ENCODE measurements at regions of chr13 and their contacts with region 1.

Region 1: GRCh38 chr13:36999054-36999714 is at the start of gene ALG5:
- DNase-seq: peak; percentile 78
- ATAC-seq: peak; percentile 88
- H3K4me3 ChIP-seq: peak within 1 kb of the TSS; percentile 97 to 99 (median 97)
- H3K27ac ChIP-seq: peak within 1 kb of the TSS; percentile 99
- H3K4me1 ChIP-seq: peaks cover 27% of the 10 kb centered on the region
- H3K27me3 ChIP-seq: no peaks in the 10 kb centered on the region; a peak in 1 of 5 replicates
- CTCF ChIP-seq: peak; percentile 87
- EP300 ChIP-seq: 0 out of 4 replicates have a peak, but pooled peaks of 1 of the 2 experiments have one; percentile 21
- POLR2A ChIP-seq: peak; percentile 92
- RAD21 ChIP-seq: peak; percentile 49; the same call in 1 of the 2 replicates
- total RNA-seq, gene ALG5: 29.0 and 51.1 TPM in 2 replicates

Region 2: GRCh38 chr13:36074659-36075058 is 924.5 kb before region 1 on chr13:
- CTCF ChIA-PET with region 1: no interaction called
- POLR2A ChIA-PET with region 1: no interaction called
- in situ Hi-C with region 1: no loop called
- intact Hi-C with region 1: no loop called
- DNase-seq: no peak
- ATAC-seq: no peak
- H3K4me3 ChIP-seq: no peak overlapping the region
- H3K27ac ChIP-seq: no peak overlapping the region
- H3K4me1 ChIP-seq: no peaks in the 10 kb centered on the region
- H3K27me3 ChIP-seq: no peaks in the 10 kb centered on the region
- CTCF ChIP-seq: no peak
- EP300 ChIP-seq: no peak
- POLR2A ChIP-seq: no peak
- RAD21 ChIP-seq: no peak

Region 3: GRCh38 chr13:36818804-36819738 is 180.1 kb before region 1 on chr13 and contains the start of gene RFXAP:
- CTCF ChIA-PET with region 1: no interaction called
- POLR2A ChIA-PET with region 1: no interaction called
- in situ Hi-C with region 1: no loop called
- intact Hi-C with region 1: no loop called
- DNase-seq: peak; percentile 74
- ATAC-seq: peak; percentile 93
- H3K4me3 ChIP-seq: peak within 1 kb of the TSS; percentile 71 to 84 (median 77)
- H3K27ac ChIP-seq: peak within 1 kb of the TSS; percentile 63
- H3K4me1 ChIP-seq: peaks cover 46% of the 10 kb centered on the region
- H3K27me3 ChIP-seq: no peaks in the 10 kb centered on the region; a peak in 1 of 5 replicates
- CTCF ChIP-seq: peak; percentile 22; the same call in 1 of the 2 replicates
- EP300 ChIP-seq: no peak
- POLR2A ChIP-seq: peak; percentile 62 to 78
- RAD21 ChIP-seq: peak; percentile 25; the same call in 1 of the 2 replicates
- total RNA-seq, gene RFXAP: 1.8 and 4.4 TPM in 2 replicates

Region 4: GRCh38 chr13:36880961-36881360 is 118.2 kb before region 1 on chr13:
- CTCF ChIA-PET with region 1: no interaction called
- POLR2A ChIA-PET with region 1: interaction called, 4 read pairs
- in situ Hi-C with region 1: no loop called
- intact Hi-C with region 1: loop called (anchors 1 kb)
- DNase-seq: no peak
- ATAC-seq: no peak
- H3K4me3 ChIP-seq: no peak overlapping the region
- H3K27ac ChIP-seq: peak overlapping the region; percentile 99
- H3K4me1 ChIP-seq: peaks cover 63% of the 10 kb centered on the region
- H3K27me3 ChIP-seq: no peaks in the 10 kb centered on the region
- CTCF ChIP-seq: no peak
- EP300 ChIP-seq: no peak
- POLR2A ChIP-seq: no peak
- RAD21 ChIP-seq: no peak

Region 5: DNA sequence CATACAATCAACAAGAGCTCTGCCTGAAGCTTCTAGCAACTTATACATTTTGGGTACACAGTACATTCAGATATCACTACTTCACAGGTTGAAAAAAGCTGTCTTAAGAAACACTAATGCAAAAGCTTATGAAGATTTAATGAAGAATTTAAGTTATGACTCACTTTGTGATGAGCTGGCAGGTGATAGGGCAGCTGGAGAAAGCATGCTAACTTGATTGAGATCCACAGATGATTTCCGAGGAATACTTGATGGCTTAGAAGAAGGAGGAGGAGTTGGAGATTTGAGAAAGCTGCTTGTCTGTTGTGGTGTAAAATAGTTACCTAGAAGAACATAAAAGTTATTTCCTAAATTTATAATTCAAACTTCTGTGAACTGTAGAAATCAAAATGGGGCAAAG is 24.7 kb after region 1 on chr13:
- CTCF ChIA-PET with region 1: no interaction called
- POLR2A ChIA-PET with region 1: no interaction called
- in situ Hi-C with region 1: no loop called
- intact Hi-C with region 1: loop called (anchors 1 kb)
- DNase-seq: no peak
- ATAC-seq: no peak
- H3K4me3 ChIP-seq: no peak overlapping the region
- H3K27ac ChIP-seq: no peak overlapping the region
- H3K4me1 ChIP-seq: no peaks in the 10 kb centered on the region
- H3K27me3 ChIP-seq: no peaks in the 10 kb centered on the region
- CTCF ChIP-seq: no peak
- EP300 ChIP-seq: no peak
- POLR2A ChIP-seq: no peak
- RAD21 ChIP-seq: no peak

Region 6: DNA sequence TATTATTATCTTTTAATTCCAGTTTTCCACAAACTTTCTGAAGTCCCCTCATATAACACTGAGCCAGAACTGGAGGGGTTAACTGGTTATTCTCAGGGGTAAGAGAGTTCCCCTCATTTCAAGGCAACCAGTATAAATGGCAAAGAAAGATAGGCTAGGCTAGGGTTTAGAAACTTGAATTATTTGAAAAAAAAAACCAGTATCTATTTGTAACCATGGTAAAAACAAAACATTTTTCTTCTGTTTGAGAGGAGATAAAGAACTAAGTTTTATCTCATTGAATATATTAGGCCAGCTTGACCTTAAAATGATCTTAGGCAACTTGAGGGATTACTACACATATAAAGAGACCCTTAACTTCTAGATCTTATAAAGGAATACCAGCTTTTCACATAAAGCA is 40.7 kb after region 1 on chr13:
- CTCF ChIA-PET with region 1: no interaction called
- POLR2A ChIA-PET with region 1: no interaction called
- in situ Hi-C with region 1: loop called (anchors 5 kb)
- intact Hi-C with region 1: no loop called
- DNase-seq: no peak
- ATAC-seq: no peak
- H3K4me3 ChIP-seq: no peak overlapping the region
- H3K27ac ChIP-seq: no peak overlapping the region
- H3K4me1 ChIP-seq: no peaks in the 10 kb centered on the region
- H3K27me3 ChIP-seq: no peaks in the 10 kb centered on the region
- CTCF ChIP-seq: no peak
- EP300 ChIP-seq: no peak
- POLR2A ChIP-seq: no peak
- RAD21 ChIP-seq: no peak

Region 7: GRCh38 chr13:37058910-37059847 is 60.0 kb after region 1 on chr13 and contains the start of gene SUPT20H:
- CTCF ChIA-PET with region 1: no interaction called
- POLR2A ChIA-PET with region 1: interaction called, 5 read pairs
- in situ Hi-C with region 1: no loop called
- intact Hi-C with region 1: loop called (anchors 5 kb)
- DNase-seq: peak; percentile 77
- ATAC-seq: peak; percentile 98
- H3K4me3 ChIP-seq: peak within 1 kb of the TSS; percentile 69 to 89 (median 86)
- H3K27ac ChIP-seq: peak within 1 kb of the TSS; percentile 71
- H3K4me1 ChIP-seq: peaks cover 18% of the 10 kb centered on the region
- H3K27me3 ChIP-seq: peaks cover 0 to 3% of the 10 kb centered on the region in 2 experiments; a peak in 1 of 5 replicates
- CTCF ChIP-seq: peak; percentile 16; the same call in 1 of the 2 replicates
- EP300 ChIP-seq: no peak
- POLR2A ChIP-seq: peak; percentile 56 to 68
- RAD21 ChIP-seq: no peak
- total RNA-seq, gene SUPT20H: 33.9 and 35.0 TPM in 2 replicates

Region 8: DNA sequence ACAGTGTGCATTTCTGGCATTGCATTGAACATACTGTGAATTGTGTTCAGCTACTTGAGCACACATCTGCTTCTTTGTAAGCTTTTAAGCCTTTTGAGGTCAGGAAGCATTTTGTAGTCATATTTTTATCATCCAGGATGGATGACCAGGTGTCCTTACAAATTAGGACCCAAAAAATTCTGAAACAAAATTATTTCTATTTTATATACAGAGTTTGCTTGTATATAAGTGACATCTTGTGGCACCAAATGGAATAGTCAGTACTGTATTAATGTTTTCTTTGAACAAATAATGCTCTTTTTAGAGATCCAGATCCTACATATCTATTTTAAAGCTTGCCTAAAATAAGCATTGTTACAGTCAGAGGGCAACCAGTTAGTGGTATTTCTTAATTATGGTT is 69.8 kb after region 1 on chr13:
- CTCF ChIA-PET with region 1: no interaction called
- POLR2A ChIA-PET with region 1: interaction called, 3 read pairs
- in situ Hi-C with region 1: no loop called
- intact Hi-C with region 1: loop called (anchors 2 kb)
- DNase-seq: no peak
- ATAC-seq: peak; percentile 33
- H3K4me3 ChIP-seq: peak overlapping the region; percentile 35 to 72 (median 41)
- H3K27ac ChIP-seq: no peak overlapping the region
- H3K4me1 ChIP-seq: peaks cover 15% of the 10 kb centered on the region
- H3K27me3 ChIP-seq: peaks cover 0 to 11% of the 10 kb centered on the region in 2 experiments; a peak in 1 of 5 replicates
- CTCF ChIP-seq: peak; percentile 42
- EP300 ChIP-seq: no peak
- POLR2A ChIP-seq: no peak
- RAD21 ChIP-seq: no peak

Region 9: GRCh38 chr13:37453246-37453645 is 454.1 kb after region 1 on chr13:
- CTCF ChIA-PET with region 1: no interaction called
- POLR2A ChIA-PET with region 1: no interaction called
- in situ Hi-C with region 1: no loop called
- intact Hi-C with region 1: no loop called
- DNase-seq: no peak
- ATAC-seq: no peak
- H3K4me3 ChIP-seq: no peak overlapping the region
- H3K27ac ChIP-seq: no peak overlapping the region
- H3K4me1 ChIP-seq: no peaks in the 10 kb centered on the region
- H3K27me3 ChIP-seq: no peaks in the 10 kb centered on the region; a peak in 1 of 5 replicates
- CTCF ChIP-seq: no peak
- EP300 ChIP-seq: no peak
- POLR2A ChIP-seq: no peak
- RAD21 ChIP-seq: no peak

Measured in HepG2 (cell line).